OCI-LY7 (cell line): ENCODE measurements at regions of chr3 and their contacts with region 1.

Region 1: GRCh38 chr3:10322352-10322710 is 1.4 kb upstream of the SEC13 start:
- DNase-seq: peak; percentile 64
- H3K4me3 ChIP-seq: no peak overlapping the region
- H3K27ac ChIP-seq: no peak overlapping the region
- H3K4me1 ChIP-seq: peaks cover 20% of the 10 kb centered on the region
- CTCF ChIP-seq: peak; percentile 83

Region 2: GRCh38 chr3:9843715-9844438 is 478.5 kb before region 1 on chr3 and contains the start of gene RPUSD3:
- CTCF ChIA-PET with region 1: interaction called, 3 read pairs
- POLR2A ChIA-PET with region 1: no interaction called
- intact Hi-C with region 1: loop called (anchors 5 kb)
- DNase-seq: peak; percentile 95
- H3K4me3 ChIP-seq: peak within 1 kb of the TSS; percentile 85
- H3K27ac ChIP-seq: peak within 1 kb of the TSS; percentile 15
- H3K4me1 ChIP-seq: peaks cover 16% of the 10 kb centered on the region
- CTCF ChIP-seq: no peak
- total RNA-seq, gene RPUSD3: 44.2 and 47.4 TPM in 2 replicates

Region 3: GRCh38 chr3:10115326-10116137 is 206.8 kb before region 1 on chr3 and contains the start of gene BRK1:
- CTCF ChIA-PET with region 1: no interaction called
- POLR2A ChIA-PET with region 1: interaction called, 5 read pairs
- intact Hi-C with region 1: loop called (anchors 5 kb)
- DNase-seq: peak; percentile 98
- H3K4me3 ChIP-seq: peak within 1 kb of the TSS; percentile 97
- H3K27ac ChIP-seq: peak within 1 kb of the TSS; percentile 61
- H3K4me1 ChIP-seq: peaks cover 20% of the 10 kb centered on the region
- CTCF ChIP-seq: no peak
- total RNA-seq, gene BRK1: 67.5 and 80.4 TPM in 2 replicates

Region 4: DNA sequence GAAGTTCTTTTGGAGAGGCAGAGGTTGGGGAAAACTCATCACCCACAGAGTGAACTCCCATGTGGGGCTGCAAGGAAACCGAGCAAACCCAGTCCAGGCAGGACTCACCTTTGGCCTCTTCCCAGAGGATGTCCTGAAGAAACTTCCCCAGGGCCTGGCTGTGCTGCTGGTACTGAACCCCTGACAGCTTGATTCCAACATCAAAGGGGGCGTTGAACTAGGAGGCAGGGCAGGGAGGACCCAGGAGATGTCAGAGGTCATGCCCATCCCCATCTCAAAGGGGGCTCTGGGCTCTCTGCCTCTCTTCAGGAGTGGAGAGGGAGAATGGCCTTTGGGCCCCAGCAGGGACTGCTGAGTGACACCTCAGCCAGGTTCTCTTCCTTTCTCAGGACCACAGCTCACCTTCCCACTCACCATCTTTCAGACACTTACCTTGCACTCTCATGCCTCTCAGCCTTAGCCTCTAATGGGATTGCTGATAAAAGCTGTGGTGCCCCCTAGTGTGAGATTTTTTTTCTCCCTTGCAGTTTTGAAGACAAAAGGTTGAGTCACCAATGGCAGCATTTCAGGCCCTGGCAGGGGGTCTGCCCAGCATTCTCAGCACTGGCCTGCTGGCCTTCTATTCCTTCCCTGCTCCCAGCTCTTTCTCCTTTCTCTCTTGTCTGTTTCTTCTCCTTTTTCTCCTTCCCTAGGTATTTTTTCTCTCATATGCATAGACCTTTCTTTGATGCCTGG is 35.6 kb before region 1 on chr3:
- CTCF ChIA-PET with region 1: no interaction called
- POLR2A ChIA-PET with region 1: no interaction called
- intact Hi-C with region 1: no loop called
- DNase-seq: peak; percentile 69
- H3K4me3 ChIP-seq: no peak overlapping the region
- H3K27ac ChIP-seq: no peak overlapping the region
- H3K4me1 ChIP-seq: no peaks in the 10 kb centered on the region
- CTCF ChIP-seq: peak; percentile 74